ENCODE measurements at regions of chr13 and their contacts with region 1.

Region 1: DNA sequence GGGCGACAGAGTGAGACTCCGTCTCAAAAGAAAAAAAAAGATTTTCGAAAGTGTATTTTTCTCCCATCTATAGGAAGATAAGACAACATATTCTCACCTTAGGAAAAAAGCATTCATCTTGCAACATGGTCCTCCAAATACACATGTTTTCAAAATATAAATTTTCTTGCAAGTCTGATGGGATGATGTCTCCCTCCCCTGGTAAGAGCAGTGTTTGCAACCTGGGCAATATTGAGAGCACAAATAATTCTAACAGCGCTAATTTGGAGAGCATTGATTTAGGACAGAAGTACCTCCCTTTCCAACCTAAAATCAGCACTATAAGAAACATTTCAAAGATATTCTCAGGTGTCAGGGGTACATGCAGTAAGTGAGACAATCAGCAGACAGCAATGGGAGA is 61.0 kb upstream of the SHISA2 start:
- DNase-seq: peak; percentile 2
- H3K4me3 Mint-ChIP-seq: no peak overlapping the region
- H3K27ac Mint-ChIP-seq: no peak overlapping the region
- H3K4me1 Mint-ChIP-seq: no peaks in the 10 kb centered on the region
- H3K27me3 Mint-ChIP-seq: peaks cover 30% of the 10 kb centered on the region
- CTCF ChIP-seq: peak; percentile 38

Region 2: GRCh38 chr13:25963674-25964073 is 149.2 kb before region 1 on chr13:
- CTCF ChIA-PET with region 1: no interaction called
- POLR2A ChIA-PET with region 1: no interaction called
- intact Hi-C with region 1: no loop called
- DNase-seq: peak; percentile 36
- H3K4me3 Mint-ChIP-seq: no peak overlapping the region
- H3K27ac Mint-ChIP-seq: no peak overlapping the region
- H3K4me1 Mint-ChIP-seq: no peaks in the 10 kb centered on the region
- H3K27me3 Mint-ChIP-seq: no peaks in the 10 kb centered on the region
- CTCF ChIP-seq: no peak

Region 3: GRCh38 chr13:26074706-26075105 is 38.1 kb before region 1 on chr13:
- CTCF ChIA-PET with region 1: no interaction called
- POLR2A ChIA-PET with region 1: no interaction called
- intact Hi-C with region 1: loop called (anchors 2 kb)
- DNase-seq: peak; percentile 46
- H3K4me3 Mint-ChIP-seq: peak overlapping the region; percentile 40
- H3K27ac Mint-ChIP-seq: peak overlapping the region; percentile 51
- H3K4me1 Mint-ChIP-seq: no peaks in the 10 kb centered on the region
- H3K27me3 Mint-ChIP-seq: no peaks in the 10 kb centered on the region
- CTCF ChIP-seq: peak; percentile 8